CD14-positive monocyte (primary cell): ENCODE measurements at regions of chr4 and their contacts with region 1.

Region 1: DNA sequence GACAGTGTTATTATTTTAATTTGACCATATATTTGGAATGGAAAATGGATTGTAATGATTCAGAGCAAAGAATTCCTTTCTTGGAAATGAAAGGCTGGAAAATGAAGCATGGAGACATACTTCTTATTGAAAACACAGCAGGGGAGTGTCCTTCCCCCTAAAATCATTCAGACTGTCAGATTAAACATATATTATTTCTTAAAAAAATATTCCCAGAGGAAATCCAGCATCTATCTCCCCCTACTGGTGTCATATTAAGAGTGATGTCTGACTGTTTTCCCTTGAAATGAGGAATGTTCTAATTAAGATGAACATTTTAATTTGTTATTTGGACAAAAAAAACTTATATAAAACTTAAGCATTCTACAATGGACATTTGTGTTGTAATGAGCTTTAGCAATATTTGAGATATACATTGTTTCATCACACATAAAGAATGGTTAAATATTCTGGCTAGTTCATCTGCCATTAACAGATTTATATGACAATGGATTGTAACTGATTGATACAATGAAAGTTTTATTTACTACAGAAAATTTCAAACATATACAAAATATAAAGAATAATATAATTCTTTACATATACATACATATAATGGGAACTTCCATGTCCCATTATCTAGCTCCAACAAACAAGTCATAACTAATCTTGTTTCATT is 264.6 kb downstream of the SPRY1 start:
- DNase-seq: peak in 1 of 3 donors; percentile 11
- H3K4me3 ChIP-seq: no peak overlapping the region
- H3K4me3 Mint-ChIP-seq: no peak overlapping the region
- H3K27ac ChIP-seq: no peak overlapping the region
- H3K27ac Mint-ChIP-seq: no peak overlapping the region
- H3K4me1 ChIP-seq: no peaks in the 10 kb centered on the region
- H3K4me1 Mint-ChIP-seq: peaks cover 3% of the 10 kb centered on the region
- H3K27me3 ChIP-seq: no peaks in the 10 kb centered on the region
- H3K27me3 Mint-ChIP-seq: peaks cover 4 to 6% (median 5%) of the 10 kb centered on the region in 3 donors
- CTCF ChIP-seq: peak; percentile 67

Region 2: GRCh38 chr4:123102897-123103471 is 558.2 kb before region 1 on chr4:
- intact Hi-C with region 1: loop called in 1 of 2 experiments (anchors 10 kb)
- DNase-seq: peak; percentile 4 to 23 (median 7)
- H3K4me3 ChIP-seq: no peak overlapping the region
- H3K4me3 Mint-ChIP-seq: no peak overlapping the region
- H3K27ac ChIP-seq: no peak overlapping the region
- H3K27ac Mint-ChIP-seq: no peak overlapping the region
- H3K4me1 ChIP-seq: no peaks in the 10 kb centered on the region
- H3K4me1 Mint-ChIP-seq: no peaks in the 10 kb centered on the region
- H3K27me3 ChIP-seq: no peaks in the 10 kb centered on the region
- H3K27me3 Mint-ChIP-seq: no peaks in the 10 kb centered on the region
- CTCF ChIP-seq: peak; percentile 84

Region 3: DNA sequence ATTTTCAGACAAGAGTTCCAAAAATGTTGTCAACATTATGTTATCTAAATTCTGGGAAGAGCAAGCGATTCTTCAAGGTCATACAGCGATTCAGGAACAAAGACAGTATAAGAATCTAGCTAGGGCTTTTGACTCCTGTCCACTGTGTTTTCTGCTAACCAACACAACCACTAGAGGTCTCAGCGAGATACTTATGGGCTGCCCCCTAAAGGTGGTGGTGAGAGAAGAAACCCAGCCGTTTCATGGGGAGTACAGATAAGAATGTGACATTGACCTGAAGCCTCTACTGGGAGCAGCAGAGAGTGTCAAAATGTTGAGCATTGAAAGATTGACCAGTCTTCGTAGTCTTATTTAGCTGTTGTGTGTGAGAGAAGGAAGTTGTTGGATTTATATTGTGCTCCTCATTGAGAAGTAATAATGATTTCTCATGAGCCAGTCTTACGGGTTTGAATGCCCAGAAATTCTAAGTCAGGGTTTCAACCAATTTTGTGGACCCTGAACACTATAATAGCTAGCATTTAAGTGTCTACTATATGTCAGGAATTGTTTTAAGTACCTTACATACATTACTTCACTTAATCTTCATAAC is 96.4 kb before region 1 on chr4:
- intact Hi-C with region 1: loop called in 1 of 2 experiments (anchors 10 kb)
- DNase-seq: peak; percentile 55 to 77 (median 74)
- H3K4me3 ChIP-seq: no peak overlapping the region
- H3K4me3 Mint-ChIP-seq: no peak overlapping the region
- H3K27ac ChIP-seq: no peak overlapping the region
- H3K27ac Mint-ChIP-seq: peak overlapping the region in 1 of 7 donors; percentile 52
- H3K4me1 ChIP-seq: no peaks in the 10 kb centered on the region
- H3K4me1 Mint-ChIP-seq: peaks cover 4% of the 10 kb centered on the region
- H3K27me3 ChIP-seq: no peaks in the 10 kb centered on the region
- H3K27me3 Mint-ChIP-seq: peaks cover 0 to 5% (median 0%) of the 10 kb centered on the region in 3 donors
- CTCF ChIP-seq: peak; percentile 93

Region 4: DNA sequence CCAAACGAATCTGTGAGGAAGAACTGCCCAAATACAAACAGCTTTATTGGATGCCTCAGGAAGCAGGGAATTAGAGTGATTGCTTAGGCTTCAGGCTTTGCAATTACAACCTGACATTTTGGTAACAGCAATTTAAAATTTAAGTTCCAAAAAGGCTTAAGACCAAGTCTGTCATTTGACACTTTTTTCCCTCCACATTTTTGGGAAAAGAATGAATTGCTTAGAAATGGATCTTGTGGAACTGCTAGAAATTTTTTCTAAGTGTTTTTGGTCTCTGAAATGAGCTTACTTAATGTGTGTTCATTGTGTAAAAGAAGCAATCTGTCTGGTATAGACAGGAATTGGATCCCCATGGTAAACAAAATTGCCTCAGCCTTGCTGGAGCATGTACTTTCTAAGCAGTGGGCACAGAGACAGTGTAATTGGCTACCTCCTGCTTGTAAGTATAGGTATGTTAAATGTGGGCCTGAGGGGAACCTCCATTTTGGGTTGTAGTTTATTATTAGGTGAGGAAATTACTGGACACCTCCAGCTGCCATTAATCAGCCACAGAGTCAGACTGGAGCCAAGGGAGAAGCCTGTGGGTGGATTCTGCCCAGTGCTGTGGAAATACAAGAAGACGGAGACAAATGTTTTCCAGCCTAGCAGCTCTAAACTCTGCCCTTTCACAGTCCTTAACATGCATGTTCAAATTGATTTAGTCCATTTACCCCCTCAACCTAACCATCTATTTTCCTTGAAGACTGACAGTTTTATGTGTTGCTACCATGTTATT is 208.3 kb after region 1 on chr4:
- intact Hi-C with region 1: no loop called
- DNase-seq: no peak
- H3K4me3 ChIP-seq: no peak overlapping the region
- H3K4me3 Mint-ChIP-seq: no peak overlapping the region
- H3K27ac ChIP-seq: no peak overlapping the region
- H3K27ac Mint-ChIP-seq: no peak overlapping the region
- H3K4me1 ChIP-seq: no peaks in the 10 kb centered on the region
- H3K4me1 Mint-ChIP-seq: no peaks in the 10 kb centered on the region
- H3K27me3 ChIP-seq: no peaks in the 10 kb centered on the region
- H3K27me3 Mint-ChIP-seq: peaks cover 0 to 2% (median 0%) of the 10 kb centered on the region in 3 donors
- CTCF ChIP-seq: no peak